ENCODE measurements at regions of chr13 and their contacts with region 1.

Region 1: GRCh38 chr13:49110122-49110912 is 109.8 kb upstream of the MLNR start:
- DNase-seq: peak; percentile 87
- ATAC-seq: peak; percentile 79
- H3K4me3 Mint-ChIP-seq: peak overlapping the region; percentile 85
- H3K27ac Mint-ChIP-seq: peak overlapping the region; percentile 86
- H3K4me1 Mint-ChIP-seq: peaks cover 25% of the 10 kb centered on the region
- H3K27me3 Mint-ChIP-seq: no peaks in the 10 kb centered on the region

Region 2: GRCh38 chr13:48709213-48709612 is 401.1 kb before region 1 on chr13:
- CTCF ChIA-PET with region 1: no interaction called
- POLR2A ChIA-PET with region 1: no interaction called
- intact Hi-C with region 1: no loop called
- DNase-seq: no peak
- ATAC-seq: peak; percentile 92
- H3K4me3 Mint-ChIP-seq: no peak overlapping the region
- H3K27ac Mint-ChIP-seq: no peak overlapping the region
- H3K4me1 Mint-ChIP-seq: peaks cover 18% of the 10 kb centered on the region
- H3K27me3 Mint-ChIP-seq: no peaks in the 10 kb centered on the region

Region 3: DNA sequence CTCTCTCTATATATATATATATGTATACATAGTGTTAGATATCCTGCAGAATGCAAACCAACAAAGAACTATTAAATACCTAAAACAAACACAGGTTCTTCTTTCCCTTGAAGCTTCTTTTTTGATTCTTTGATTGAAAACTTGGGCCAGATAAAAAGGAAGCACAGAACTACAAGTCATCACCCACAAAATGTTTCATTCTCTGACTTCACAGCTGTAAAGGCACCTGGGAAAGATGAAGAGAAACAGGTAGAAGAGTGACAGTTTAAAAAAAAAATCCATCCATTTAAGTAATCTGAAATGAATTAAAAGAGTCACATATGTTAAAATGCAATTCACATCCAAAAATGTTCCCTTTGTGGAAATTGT is 225.3 kb before region 1 on chr13:
- CTCF ChIA-PET with region 1: no interaction called
- POLR2A ChIA-PET with region 1: no interaction called
- intact Hi-C with region 1: loop called in 1 of 2 experiments (anchors 2 kb)
- DNase-seq: no peak
- ATAC-seq: no peak
- H3K4me3 Mint-ChIP-seq: no peak overlapping the region
- H3K27ac Mint-ChIP-seq: peak overlapping the region; percentile 58
- H3K4me1 Mint-ChIP-seq: peaks cover 62% of the 10 kb centered on the region
- H3K27me3 Mint-ChIP-seq: peaks cover 3% of the 10 kb centered on the region

Region 4: GRCh38 chr13:49093376-49093775 is 16.9 kb before region 1 on chr13:
- CTCF ChIA-PET with region 1: no interaction called
- POLR2A ChIA-PET with region 1: no interaction called
- intact Hi-C with region 1: no loop called
- DNase-seq: no peak
- ATAC-seq: no peak
- H3K4me3 Mint-ChIP-seq: no peak overlapping the region
- H3K27ac Mint-ChIP-seq: no peak overlapping the region
- H3K4me1 Mint-ChIP-seq: peaks cover 15% of the 10 kb centered on the region
- H3K27me3 Mint-ChIP-seq: no peaks in the 10 kb centered on the region

Region 5: GRCh38 chr13:49185264-49185663 is 74.9 kb after region 1 on chr13:
- CTCF ChIA-PET with region 1: no interaction called
- POLR2A ChIA-PET with region 1: no interaction called
- intact Hi-C with region 1: no loop called
- DNase-seq: peak; percentile 14
- ATAC-seq: peak; percentile 72
- H3K4me3 Mint-ChIP-seq: no peak overlapping the region
- H3K27ac Mint-ChIP-seq: peak overlapping the region; percentile 44
- H3K4me1 Mint-ChIP-seq: peaks cover 8% of the 10 kb centered on the region
- H3K27me3 Mint-ChIP-seq: no peaks in the 10 kb centered on the region

Region 6: DNA sequence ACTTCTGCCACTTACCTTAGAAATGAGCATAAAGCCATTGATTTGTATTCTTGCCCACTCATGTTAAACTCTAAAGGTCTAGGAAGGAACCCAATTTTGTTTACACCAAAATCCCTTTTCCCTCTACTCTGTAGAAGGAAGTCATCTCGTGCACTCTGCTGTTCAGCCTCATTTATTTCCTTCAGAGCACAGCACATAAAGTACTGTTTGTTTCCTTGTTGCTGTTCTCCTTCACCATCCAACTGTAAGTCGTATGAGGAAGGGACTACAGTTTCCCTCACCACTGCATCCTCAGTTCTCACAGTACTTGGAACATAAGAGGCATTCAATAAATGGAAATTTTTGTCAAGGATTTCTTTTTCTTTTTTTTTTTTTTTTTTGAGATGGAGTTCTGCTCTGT is 162.0 kb after region 1 on chr13:
- CTCF ChIA-PET with region 1: no interaction called
- POLR2A ChIA-PET with region 1: no interaction called
- intact Hi-C with region 1: loop called in 1 of 2 experiments (anchors 5 kb)
- DNase-seq: no peak
- ATAC-seq: no peak
- H3K4me3 Mint-ChIP-seq: no peak overlapping the region
- H3K27ac Mint-ChIP-seq: no peak overlapping the region
- H3K4me1 Mint-ChIP-seq: peaks cover 12% of the 10 kb centered on the region
- H3K27me3 Mint-ChIP-seq: no peaks in the 10 kb centered on the region

Measured in activated CD4-positive, alpha-beta T cell treated with anti-CD3 and anti-CD28 coated beads for 36 hours (primary cell).